ENCODE measurements at regions of chr17 and their contacts with region 1.

Region 1: GRCh38 chr17:143782-144281 is 6.5 kb downstream of the SCGB1C2 start:
- DNase-seq: peak; percentile 58 to 71 (median 61)
- H3K4me3 ChIP-seq: no peak overlapping the region
- H3K4me3 Mint-ChIP-seq: peak overlapping the region in 1 of 2 donors; percentile 80
- H3K27ac ChIP-seq: no peak overlapping the region
- H3K27ac Mint-ChIP-seq: no peak overlapping the region
- H3K4me1 ChIP-seq: no peaks in the 10 kb centered on the region
- H3K4me1 Mint-ChIP-seq: peaks cover 4% of the 10 kb centered on the region
- H3K27me3 ChIP-seq: peaks cover 2 to 12% of the 10 kb centered on the region in 2 donors
- H3K27me3 Mint-ChIP-seq: peaks cover 11 to 20% (median 19%) of the 10 kb centered on the region in 3 donors
- CTCF ChIP-seq: peak; percentile 94

Region 2: GRCh38 chr17:181215-182049 is 37.6 kb after region 1 on chr17 and contains the start of gene DOC2B:
- intact Hi-C with region 1: no loop called
- DNase-seq: peak; percentile 20 to 39 (median 24)
- H3K4me3 ChIP-seq: peak within 1 kb of the TSS in 1 of 3 experiments; percentile 56
- H3K4me3 Mint-ChIP-seq: peak within 1 kb of the TSS; percentile 18 to 86
- H3K27ac ChIP-seq: no peak within 1 kb of the TSS
- H3K27ac Mint-ChIP-seq: no peak within 1 kb of the TSS
- H3K4me1 ChIP-seq: peaks cover 11 to 28% of the 10 kb centered on the region in 2 donors
- H3K4me1 Mint-ChIP-seq: peaks cover 28% of the 10 kb centered on the region
- H3K27me3 ChIP-seq: peaks cover 9 to 55% of the 10 kb centered on the region in 2 donors
- H3K27me3 Mint-ChIP-seq: peaks cover 48 to 80% (median 57%) of the 10 kb centered on the region in 3 donors
- CTCF ChIP-seq: no peak
- polyA plus RNA-seq, gene DOC2B: 0.02 to 0.19 TPM in 2 of 3 donors, not detected in the other

Region 3: DNA sequence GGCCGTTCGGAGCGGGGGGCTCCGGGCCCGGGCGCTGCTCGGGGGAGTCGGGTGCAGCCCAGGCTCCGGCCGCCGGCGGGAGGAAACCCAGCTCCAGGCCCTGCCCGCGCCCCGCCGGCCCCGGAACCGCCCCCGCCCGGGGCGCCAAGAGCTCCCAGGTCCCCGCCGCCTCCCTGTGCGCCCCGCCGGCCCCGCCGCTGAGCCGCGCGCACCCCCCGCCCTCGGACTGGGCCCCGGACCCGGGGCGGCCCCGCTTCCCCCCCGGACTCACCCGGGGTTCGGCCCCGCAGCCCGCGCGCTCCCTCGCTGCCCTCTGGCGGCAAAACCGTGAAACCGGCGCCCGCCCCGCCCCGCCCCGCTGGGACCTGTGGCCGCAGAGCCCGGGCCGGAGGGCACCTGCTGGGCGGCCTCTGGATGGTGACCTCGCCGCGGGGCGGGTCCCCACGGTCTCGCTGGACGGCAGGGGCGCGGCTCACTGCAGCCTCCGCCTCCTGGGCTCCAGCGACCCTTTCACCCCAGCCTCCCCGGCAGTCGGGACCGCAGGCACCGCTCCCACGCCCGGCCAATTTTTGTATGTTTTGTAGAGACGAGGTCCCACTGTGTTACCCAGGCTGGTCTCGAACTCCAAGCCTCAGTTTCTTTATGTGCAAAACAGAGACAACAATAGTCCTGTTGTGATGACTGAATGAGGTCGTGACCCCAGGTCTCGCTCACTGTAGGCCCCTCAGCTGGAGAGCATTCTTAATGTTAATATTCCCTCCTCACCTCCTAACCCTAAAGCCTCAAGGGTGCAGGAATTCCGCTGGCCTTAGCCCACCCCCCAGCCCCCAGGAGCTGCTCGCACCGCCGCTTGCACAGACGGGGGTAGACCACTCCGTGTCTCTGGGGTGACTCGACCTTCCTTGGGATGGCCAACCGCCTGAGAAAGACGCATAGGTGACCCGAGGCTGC is 242.4 kb after region 1 on chr17:
- intact Hi-C with region 1: loop called (anchors 2 kb)
- DNase-seq: peak; percentile 42 to 62 (median 47)
- H3K4me3 ChIP-seq: peak overlapping the region in 2 of 3 experiments; percentile 31 to 70
- H3K4me3 Mint-ChIP-seq: peak overlapping the region; percentile 75 to 80
- H3K27ac ChIP-seq: no peak overlapping the region
- H3K27ac Mint-ChIP-seq: no peak overlapping the region
- H3K4me1 ChIP-seq: peaks cover 11 to 16% of the 10 kb centered on the region in 2 donors
- H3K4me1 Mint-ChIP-seq: peaks cover 17% of the 10 kb centered on the region
- H3K27me3 ChIP-seq: peaks cover 14 to 32% of the 10 kb centered on the region in 2 donors
- H3K27me3 Mint-ChIP-seq: peaks cover 47 to 57% (median 50%) of the 10 kb centered on the region in 3 donors
- CTCF ChIP-seq: peak; percentile 74

Region 4: GRCh38 chr17:700504-701094 is 556.8 kb after region 1 on chr17:
- intact Hi-C with region 1: loop called (anchors 5 kb)
- DNase-seq: peak; percentile 29 to 46 (median 37)
- H3K4me3 ChIP-seq: no peak overlapping the region
- H3K4me3 Mint-ChIP-seq: no peak overlapping the region
- H3K27ac ChIP-seq: no peak overlapping the region
- H3K27ac Mint-ChIP-seq: peak overlapping the region in 4 of 7 donors; percentile 28 to 86 (median 65)
- H3K4me1 ChIP-seq: peaks cover 0 to 6% of the 10 kb centered on the region in 2 donors
- H3K4me1 Mint-ChIP-seq: peaks cover 7% of the 10 kb centered on the region
- H3K27me3 ChIP-seq: no peaks in the 10 kb centered on the region
- H3K27me3 Mint-ChIP-seq: no peaks in the 10 kb centered on the region
- CTCF ChIP-seq: peak; percentile 80

Region 5: GRCh38 chr17:752002-752619 is 608.3 kb after region 1 on chr17 and contains the start of gene GEMIN4:
- intact Hi-C with region 1: loop called in 1 of 2 experiments (anchors 5 kb)
- DNase-seq: peak; percentile 86 to 89 (median 87)
- H3K4me3 ChIP-seq: peak within 1 kb of the TSS; percentile 36 to 87 (median 62)
- H3K4me3 Mint-ChIP-seq: peak within 1 kb of the TSS; percentile 94 to 98
- H3K27ac ChIP-seq: peak within 1 kb of the TSS; percentile 50 to 84
- H3K27ac Mint-ChIP-seq: peak within 1 kb of the TSS; percentile 89 to 97 (median 94)
- H3K4me1 ChIP-seq: peaks cover 19 to 26% of the 10 kb centered on the region in 2 donors
- H3K4me1 Mint-ChIP-seq: peaks cover 29% of the 10 kb centered on the region
- H3K27me3 ChIP-seq: no peaks in the 10 kb centered on the region
- H3K27me3 Mint-ChIP-seq: peaks cover 0 to 7% (median 2%) of the 10 kb centered on the region in 3 donors
- CTCF ChIP-seq: peak; percentile 98
- polyA plus RNA-seq, gene GEMIN4: 8.8 to 10.6 (median 10.1) TPM

Region 6: GRCh38 chr17:835263-835662 is 691.4 kb after region 1 on chr17:
- intact Hi-C with region 1: no loop called
- DNase-seq: no peak
- H3K4me3 ChIP-seq: no peak overlapping the region
- H3K4me3 Mint-ChIP-seq: no peak overlapping the region
- H3K27ac ChIP-seq: no peak overlapping the region
- H3K27ac Mint-ChIP-seq: no peak overlapping the region
- H3K4me1 ChIP-seq: no peaks in the 10 kb centered on the region
- H3K4me1 Mint-ChIP-seq: no peaks in the 10 kb centered on the region
- H3K27me3 ChIP-seq: no peaks in the 10 kb centered on the region
- H3K27me3 Mint-ChIP-seq: peaks cover 3 to 6% (median 4%) of the 10 kb centered on the region in 3 donors
- CTCF ChIP-seq: no peak